ENCODE measurements at regions of chr17 and their contacts with region 1.

Region 1: DNA sequence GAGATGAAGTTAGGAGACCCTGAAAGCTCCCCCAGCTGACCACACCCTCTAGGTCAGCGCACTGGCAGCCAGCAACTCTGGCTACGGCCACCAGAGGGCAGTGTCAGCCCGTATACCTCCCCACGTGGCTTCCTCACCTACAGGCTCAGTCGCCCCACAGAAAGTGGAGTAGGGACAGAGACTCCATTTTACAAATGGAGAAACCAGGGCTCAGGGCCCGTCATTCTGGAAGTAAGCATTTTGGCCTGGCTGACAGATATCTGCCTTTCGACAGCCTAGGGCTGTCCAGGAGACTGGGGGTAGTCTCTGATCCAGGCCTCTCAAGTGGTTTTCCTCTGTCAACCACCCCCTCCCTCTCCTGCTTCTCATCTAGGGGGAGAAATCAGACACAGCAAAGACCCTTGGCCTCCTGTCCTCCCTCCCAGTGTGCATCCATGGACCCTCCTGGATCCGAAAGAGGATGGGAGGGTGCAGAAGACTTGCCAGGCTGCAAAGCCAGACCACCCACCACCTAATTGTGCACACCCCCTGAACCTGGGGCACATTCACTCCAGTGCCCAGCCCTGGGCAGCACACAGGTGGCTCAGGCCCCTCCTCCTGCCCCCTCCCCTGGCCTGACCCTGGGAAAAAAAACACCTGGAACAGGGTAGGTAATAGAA is 3.8 kb upstream of the HAP1 start:
- DNase-seq: peak; percentile 87
- ATAC-seq: peak; percentile 93
- H3K4me3 Mint-ChIP-seq: no peak overlapping the region
- H3K27ac Mint-ChIP-seq: peak overlapping the region; percentile 24
- H3K4me1 Mint-ChIP-seq: peaks cover 11% of the 10 kb centered on the region
- H3K27me3 Mint-ChIP-seq: peaks cover 42% of the 10 kb centered on the region

Region 2: GRCh38 chr17:41456208-41456607 is 282.0 kb before region 1 on chr17:
- CTCF ChIA-PET with region 1: no interaction called
- DNase-seq: no peak
- ATAC-seq: no peak
- H3K4me3 Mint-ChIP-seq: no peak overlapping the region
- H3K27ac Mint-ChIP-seq: no peak overlapping the region
- H3K4me1 Mint-ChIP-seq: no peaks in the 10 kb centered on the region
- H3K27me3 Mint-ChIP-seq: peaks cover 8% of the 10 kb centered on the region

Region 3: DNA sequence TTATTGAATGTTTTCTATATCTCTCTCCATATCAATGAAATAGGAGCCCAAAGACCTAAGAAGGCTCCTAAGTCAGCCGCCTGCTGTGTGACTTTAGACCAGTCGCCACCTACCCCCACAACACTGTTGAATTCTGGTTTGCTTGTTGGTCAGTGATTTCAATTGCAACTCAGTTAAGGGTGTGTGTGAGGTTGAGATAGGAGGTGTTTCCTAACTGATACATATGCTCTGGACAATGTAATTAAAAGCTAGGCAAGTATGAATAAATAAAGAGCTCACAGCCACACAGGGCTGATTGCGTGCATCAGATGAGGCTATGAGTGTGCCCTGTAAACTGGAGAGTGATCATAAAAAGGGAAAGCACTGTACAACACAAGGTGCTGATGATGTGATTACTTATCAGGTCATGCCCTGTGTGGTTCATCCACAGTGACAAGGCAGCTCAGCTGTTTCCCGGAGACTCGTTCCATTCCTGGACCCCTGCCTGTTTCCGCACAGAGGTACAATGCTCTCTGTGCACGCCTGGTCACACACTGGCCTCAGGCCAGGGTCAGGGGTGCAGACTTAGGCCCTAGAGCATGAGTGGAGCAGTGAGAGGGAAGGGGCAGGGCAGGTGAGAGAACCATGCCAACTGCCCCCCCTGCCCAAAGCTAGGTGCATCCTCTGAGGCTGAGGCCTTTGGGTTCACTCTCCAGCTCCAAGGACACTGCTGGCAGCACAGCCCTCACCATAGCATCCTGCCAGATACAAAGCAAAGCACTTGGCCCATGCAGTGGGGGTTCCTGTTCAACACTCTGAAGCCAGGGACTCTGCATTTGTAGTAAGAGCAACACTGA is 254.0 kb before region 1 on chr17:
- CTCF ChIA-PET with region 1: no interaction called
- DNase-seq: no peak
- ATAC-seq: no peak
- H3K4me3 Mint-ChIP-seq: no peak overlapping the region
- H3K27ac Mint-ChIP-seq: no peak overlapping the region
- H3K4me1 Mint-ChIP-seq: no peaks in the 10 kb centered on the region
- H3K27me3 Mint-ChIP-seq: peaks cover 5% of the 10 kb centered on the region

Region 4: DNA sequence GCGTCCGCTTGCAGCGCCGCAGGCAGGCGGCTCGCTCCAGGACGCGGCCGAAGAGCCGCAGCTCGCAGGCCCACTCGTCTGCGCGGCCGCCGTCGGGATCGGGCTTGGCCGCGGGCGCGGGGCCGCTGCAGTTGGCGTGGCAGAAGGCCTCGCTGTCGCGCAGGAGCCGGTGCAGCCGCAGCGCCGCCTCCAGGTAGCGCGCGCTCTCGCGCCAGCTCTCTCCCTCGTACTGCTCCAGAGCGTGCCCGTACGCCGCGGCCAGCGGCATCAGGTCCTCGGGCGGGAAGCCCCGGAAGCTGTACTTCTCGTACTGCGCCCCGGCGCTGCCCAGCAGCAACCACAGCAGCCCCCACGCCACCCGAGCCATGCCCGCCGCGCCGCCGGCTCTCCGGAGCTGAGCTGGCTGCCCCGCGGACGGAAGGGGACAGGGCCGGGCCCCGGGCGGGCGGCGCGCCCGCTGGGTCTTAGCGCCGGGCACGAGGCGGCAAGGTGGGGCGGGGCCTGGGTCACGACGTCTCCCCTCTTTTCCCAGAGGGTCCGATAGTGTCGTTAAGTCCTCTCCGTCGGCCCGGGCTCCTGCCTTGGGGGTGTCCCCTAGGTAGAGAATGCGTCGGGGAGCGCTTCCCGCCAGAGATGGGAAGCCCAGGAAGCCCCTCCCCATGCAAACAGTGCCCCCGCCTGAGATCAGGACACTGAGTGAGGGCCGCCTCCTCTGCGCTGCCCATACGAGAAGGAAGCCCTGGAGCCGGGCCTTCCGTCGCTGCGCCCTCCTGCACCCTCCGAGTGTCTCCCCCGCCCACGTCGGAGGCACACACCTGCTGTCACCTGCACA is 73.6 kb after region 1 on chr17 and contains the start of gene P3H4:
- CTCF ChIA-PET with region 1: interaction called, 11 read pairs
- DNase-seq: peak; percentile 79
- ATAC-seq: peak; percentile 94
- H3K4me3 Mint-ChIP-seq: peak within 1 kb of the TSS; percentile 86
- H3K27ac Mint-ChIP-seq: peak within 1 kb of the TSS; percentile 45
- H3K4me1 Mint-ChIP-seq: peaks cover 18% of the 10 kb centered on the region
- H3K27me3 Mint-ChIP-seq: peaks cover 18% of the 10 kb centered on the region
- total RNA-seq, gene P3H4: 2.1 to 3.0 TPM

Measured in activated CD8-positive, alpha-beta memory T cell treated with anti-CD3 and anti-CD28 coated beads, Interleukin-2, amount 10 ng/mL, durations not matched to agents 7 days and 5 days (primary cell).